A673 (cell line): ENCODE measurements at regions of chr5 and their contacts with region 1.

Region 1: DNA sequence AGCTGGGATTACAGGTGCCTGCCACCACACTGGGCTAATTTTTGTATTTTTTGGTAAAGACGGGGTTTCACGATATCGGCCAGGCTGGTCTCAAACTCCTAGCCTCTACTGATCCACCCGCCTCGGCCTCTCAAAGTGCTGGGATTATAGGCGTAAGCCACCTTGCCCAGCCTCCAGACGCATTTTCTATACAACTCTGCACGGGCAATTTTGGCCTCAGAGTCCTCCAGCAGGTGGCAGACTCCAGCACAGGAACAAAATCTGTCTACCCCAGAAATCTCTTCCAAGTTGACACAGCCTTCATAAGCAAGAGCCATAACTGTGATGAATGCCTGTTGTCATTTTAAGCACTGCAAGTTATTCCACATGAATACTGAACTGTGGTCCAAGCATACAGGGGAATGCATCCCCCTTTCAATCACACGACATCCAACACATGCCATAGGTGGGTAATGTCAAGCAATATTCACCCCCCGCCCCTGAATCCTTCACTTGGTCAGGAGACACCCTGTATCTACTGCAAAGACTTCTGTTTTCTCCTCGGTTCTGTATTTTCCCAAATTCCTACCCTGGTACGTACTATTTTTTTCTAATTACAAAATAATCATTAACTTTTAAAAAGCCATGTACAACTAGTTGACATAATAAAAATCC is 50.8 kb downstream of the ALDH7A1 start:
- DNase-seq: peak; percentile 68
- H3K4me3 ChIP-seq: no peak overlapping the region
- H3K27ac ChIP-seq: no peak overlapping the region
- H3K4me1 ChIP-seq: no peaks in the 10 kb centered on the region
- H3K27me3 ChIP-seq: no peaks in the 10 kb centered on the region
- CTCF ChIP-seq: peak; percentile 71

Region 2: GRCh38 chr5:126234563-126235195 is 309.5 kb before region 1 on chr5:
- CTCF ChIA-PET with region 1: no interaction called
- POLR2A ChIA-PET with region 1: interaction called, 15 read pairs
- intact Hi-C with region 1: loop called (anchors 10 kb)
- DNase-seq: peak; percentile 47
- H3K4me3 ChIP-seq: no peak overlapping the region
- H3K27ac ChIP-seq: no peak overlapping the region
- H3K4me1 ChIP-seq: no peaks in the 10 kb centered on the region
- H3K27me3 ChIP-seq: peaks cover 23% of the 10 kb centered on the region
- CTCF ChIP-seq: peak; percentile 78

Region 3: DNA sequence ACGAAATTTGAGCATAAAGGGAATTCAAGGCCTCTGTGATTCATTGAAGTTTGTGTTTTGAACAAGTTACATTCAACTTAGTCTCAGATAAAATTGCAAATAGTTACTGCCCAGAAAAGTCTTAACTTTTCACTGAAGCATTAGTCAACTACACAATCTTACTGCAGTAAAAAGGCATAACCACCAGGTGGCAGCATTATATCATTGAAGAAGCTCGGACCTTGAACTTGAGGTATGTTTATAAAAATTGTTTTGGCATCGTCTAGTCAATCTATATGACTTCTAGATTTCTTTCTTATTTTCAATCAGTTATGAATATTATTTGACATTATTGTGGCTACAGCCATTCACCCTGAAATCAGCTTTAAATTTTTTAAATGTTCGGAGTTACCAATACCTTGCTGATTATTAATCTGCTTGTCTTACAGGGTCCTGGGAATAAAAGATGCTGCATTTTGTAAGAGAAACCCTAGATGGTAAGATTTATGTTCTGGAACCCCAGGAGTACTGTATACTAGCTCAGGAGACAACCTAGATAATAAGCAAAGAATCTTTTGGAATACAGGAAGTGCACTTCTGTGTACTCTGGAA is 204.9 kb before region 1 on chr5:
- CTCF ChIA-PET with region 1: interaction called, 4 read pairs
- POLR2A ChIA-PET with region 1: no interaction called
- intact Hi-C with region 1: loop called (anchors 1 kb)
- DNase-seq: peak; percentile 69
- H3K4me3 ChIP-seq: no peak overlapping the region
- H3K27ac ChIP-seq: no peak overlapping the region
- H3K4me1 ChIP-seq: no peaks in the 10 kb centered on the region
- H3K27me3 ChIP-seq: peaks cover 9% of the 10 kb centered on the region
- CTCF ChIP-seq: peak; percentile 85

Region 4: DNA sequence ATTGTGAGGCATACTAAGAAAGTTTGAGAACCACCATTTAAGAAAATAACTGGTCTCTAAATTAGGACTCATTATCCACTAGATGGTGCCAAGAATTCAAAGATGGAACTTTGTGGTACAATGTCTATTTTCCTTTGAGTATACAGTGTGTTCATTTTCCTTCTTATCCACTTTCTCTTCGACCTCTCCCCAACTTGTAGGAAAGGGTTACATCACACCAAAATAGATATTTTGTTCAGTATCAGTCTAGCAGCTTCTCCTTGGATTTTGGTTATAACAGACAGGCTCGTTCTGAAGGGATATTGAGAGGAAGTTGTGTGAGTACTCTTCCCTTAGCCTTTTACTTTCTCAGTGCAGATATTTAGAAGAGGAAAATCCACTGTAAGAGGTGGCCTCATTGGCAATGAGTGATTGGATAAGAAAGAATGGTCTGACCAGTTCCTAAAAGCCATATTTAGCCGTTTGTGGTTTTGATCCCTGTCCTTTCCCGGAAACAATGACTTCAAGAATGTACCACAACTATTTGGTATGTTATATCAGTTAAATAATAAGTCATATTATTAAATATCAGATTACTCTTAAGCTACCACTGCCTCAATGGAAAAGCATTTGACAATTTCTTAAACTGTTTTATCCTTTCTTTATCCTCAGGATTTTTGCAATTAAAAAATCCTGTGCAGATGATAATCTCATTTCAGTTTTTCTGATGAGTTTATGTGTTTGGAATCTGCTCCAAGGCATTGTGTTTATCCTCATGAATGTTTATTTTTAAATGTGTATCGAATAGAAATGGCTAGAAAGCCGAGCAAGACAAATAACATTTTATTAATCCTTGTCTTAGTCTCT is 190.0 kb before region 1 on chr5:
- CTCF ChIA-PET with region 1: no interaction called
- POLR2A ChIA-PET with region 1: no interaction called
- intact Hi-C with region 1: loop called (anchors 1 kb)
- DNase-seq: peak; percentile 62
- H3K4me3 ChIP-seq: no peak overlapping the region
- H3K27ac ChIP-seq: no peak overlapping the region
- H3K4me1 ChIP-seq: no peaks in the 10 kb centered on the region
- H3K27me3 ChIP-seq: no peaks in the 10 kb centered on the region
- CTCF ChIP-seq: peak; percentile 53

Region 5: DNA sequence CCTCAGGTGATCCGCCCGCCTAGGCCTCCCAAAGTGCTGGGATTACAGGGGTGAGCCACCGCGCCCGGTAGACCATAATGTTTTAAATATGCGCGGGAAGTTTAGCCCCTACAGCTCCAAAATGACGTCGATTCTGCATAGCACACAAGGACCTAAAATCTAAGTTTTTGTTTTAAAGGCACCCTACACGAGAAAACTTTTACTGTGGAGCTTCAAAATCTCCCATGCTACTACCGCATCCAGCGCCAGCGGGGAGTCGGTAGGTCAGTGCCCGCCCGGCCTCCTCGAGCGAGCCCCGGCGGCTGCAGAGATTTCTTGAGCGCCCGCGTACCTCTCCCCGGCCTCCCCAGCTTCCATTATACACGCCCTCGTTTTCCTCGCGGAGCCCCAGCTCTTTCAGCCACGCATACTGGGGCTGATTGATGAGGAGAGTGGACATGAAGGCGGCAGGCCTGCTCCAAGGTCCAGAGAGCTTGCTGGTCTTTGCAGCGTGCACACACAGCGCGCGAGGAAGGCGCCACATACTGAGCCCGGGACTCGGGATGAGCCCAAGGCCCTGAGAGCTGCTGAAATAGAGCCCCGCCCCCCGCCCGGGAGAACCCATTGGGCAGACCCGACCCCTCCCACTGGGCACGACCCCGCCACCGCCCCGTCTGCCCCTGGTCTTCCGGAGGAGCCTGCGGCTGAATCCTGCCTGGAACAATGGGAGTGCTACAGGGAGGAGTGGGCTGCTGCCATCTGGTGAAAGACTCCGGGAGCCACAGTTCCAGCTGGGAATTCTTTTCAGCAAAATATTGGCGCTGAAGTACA is 50.7 kb after region 1 on chr5 and contains the start of gene ALDH7A1:
- CTCF ChIA-PET with region 1: interaction called, 3 read pairs
- POLR2A ChIA-PET with region 1: no interaction called
- intact Hi-C with region 1: loop called (anchors 5 kb)
- DNase-seq: peak; percentile 95
- H3K4me3 ChIP-seq: peak within 1 kb of the TSS; percentile 68
- H3K27ac ChIP-seq: peak within 1 kb of the TSS; percentile 85
- H3K4me1 ChIP-seq: peaks cover 2% of the 10 kb centered on the region
- H3K27me3 ChIP-seq: no peaks in the 10 kb centered on the region
- CTCF ChIP-seq: peak; percentile 66
- total RNA-seq, gene ALDH7A1: 95.2 and 112 TPM in 2 replicates